Activated T-helper 1 cell treated with anti-CD3 and anti-CD28 coated beads, Interleukin-12 subunit alpha, Interleukin-12 subunit beta, Interleukin-2, Interleukin-4 antibody, amounts not matched to agents 30 ng/mL and 10 ng/mL and 1 ng/mL, durations not matched to agents 14 hours and 24 hours and 36 hours (primary cell): ENCODE measurements at regions of chr5 and their contacts with region 1.

Region 1: GRCh38 chr5:61408476-61409168 is 76.6 kb downstream of the ZSWIM6 start:
- DNase-seq: peak; percentile 90
- H3K4me3 Mint-ChIP-seq: peak overlapping the region; percentile 59
- H3K27ac Mint-ChIP-seq: peak overlapping the region; percentile 56
- H3K4me1 Mint-ChIP-seq: peaks cover 23% of the 10 kb centered on the region
- H3K27me3 Mint-ChIP-seq: peaks cover 7% of the 10 kb centered on the region

Region 2: GRCh38 chr5:60699530-60700382 is 708.9 kb before region 1 on chr5 and contains the start of gene DEPDC1B:
- intact Hi-C with region 1: loop called (anchors 5 kb)
- DNase-seq: peak; percentile 87
- H3K4me3 Mint-ChIP-seq: peak within 1 kb of the TSS; percentile 96
- H3K27ac Mint-ChIP-seq: peak within 1 kb of the TSS; percentile 93
- H3K4me1 Mint-ChIP-seq: peaks cover 37% of the 10 kb centered on the region
- H3K27me3 Mint-ChIP-seq: peaks cover 18% of the 10 kb centered on the region
- total RNA-seq, gene DEPDC1B: 19.6 and 21.2 TPM in 2 replicates

Region 3: DNA sequence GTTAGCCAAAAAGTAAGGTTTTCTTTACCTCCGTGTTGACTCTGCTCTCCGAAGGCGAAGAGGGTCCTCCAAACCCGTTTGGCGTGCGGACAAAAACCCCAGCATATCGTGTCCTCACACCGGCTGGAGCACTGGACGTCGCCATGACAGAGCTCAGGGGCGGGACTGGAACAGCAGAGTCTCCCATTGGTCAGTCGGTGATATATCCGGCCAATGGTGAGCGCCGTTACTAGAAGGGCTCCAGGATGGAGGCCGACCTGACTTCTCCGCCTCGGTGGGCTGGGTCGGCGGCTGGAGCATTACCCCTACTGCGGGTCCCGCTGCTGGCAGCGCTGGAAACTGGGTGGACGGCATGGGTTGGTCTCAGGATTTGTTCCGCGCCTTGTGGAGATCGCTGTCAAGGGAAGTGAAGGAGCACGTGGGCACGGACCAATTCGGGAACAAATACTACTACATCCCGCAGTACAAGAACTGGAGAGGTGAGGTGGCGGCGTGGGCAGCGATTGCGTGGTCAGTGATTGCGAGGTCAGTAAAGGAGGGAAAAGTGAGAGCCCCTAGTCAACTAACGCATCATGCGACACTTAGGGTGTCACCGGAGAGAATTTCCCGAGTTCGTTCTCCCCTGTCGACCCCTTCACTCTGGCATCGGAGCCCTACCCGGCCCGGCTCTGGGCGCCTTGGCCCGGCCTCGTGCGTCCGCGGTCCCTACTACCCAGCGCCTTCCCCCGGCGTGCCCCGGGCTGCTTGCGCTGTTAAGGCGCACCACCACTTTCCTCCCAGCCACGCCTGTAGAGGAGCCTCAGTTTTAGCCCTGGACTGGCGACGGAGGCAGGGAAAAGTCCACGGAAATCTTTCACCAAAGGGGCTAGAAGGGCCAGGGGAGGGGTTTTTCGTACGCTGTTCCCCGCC is 463.5 kb before region 1 on chr5 and contains the starts of genes ERCC8 and NDUFAF2:
- intact Hi-C with region 1: loop called (anchors 1 kb)
- DNase-seq: peak; percentile 85
- H3K4me3 Mint-ChIP-seq: no peak within 1 kb of the TSS
- H3K27ac Mint-ChIP-seq: no peak within 1 kb of the TSS
- H3K4me1 Mint-ChIP-seq: peaks cover 22% of the 10 kb centered on the region
- H3K27me3 Mint-ChIP-seq: no peaks in the 10 kb centered on the region
- total RNA-seq, gene ERCC8: 9.8 and 10.7 TPM in 2 replicates
- total RNA-seq, gene NDUFAF2: 32.9 and 33.8 TPM in 2 replicates

Region 4: DNA sequence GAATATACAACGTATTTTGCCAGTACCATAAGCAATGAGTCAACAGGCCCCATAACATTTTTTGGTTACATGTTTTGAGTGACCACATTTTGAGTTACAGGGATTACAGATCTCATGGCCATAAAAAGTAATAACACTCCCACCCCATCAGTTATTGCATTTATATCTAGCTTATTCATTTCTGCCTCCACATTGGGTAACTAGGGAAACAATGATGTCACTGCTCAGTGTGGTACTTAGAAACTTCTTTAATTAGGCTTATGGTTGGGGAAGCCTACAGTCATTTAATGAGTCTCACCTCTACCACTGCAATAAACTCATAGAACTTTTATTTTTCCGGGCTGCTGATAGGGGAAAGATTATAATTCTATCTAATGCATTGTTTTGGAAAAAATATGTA is 206.4 kb before region 1 on chr5:
- intact Hi-C with region 1: loop called (anchors 1 kb)
- DNase-seq: no peak
- H3K4me3 Mint-ChIP-seq: no peak overlapping the region
- H3K27ac Mint-ChIP-seq: peak overlapping the region; percentile 7
- H3K4me1 Mint-ChIP-seq: peaks cover 11% of the 10 kb centered on the region
- H3K27me3 Mint-ChIP-seq: peaks cover 5% of the 10 kb centered on the region

Region 5: DNA sequence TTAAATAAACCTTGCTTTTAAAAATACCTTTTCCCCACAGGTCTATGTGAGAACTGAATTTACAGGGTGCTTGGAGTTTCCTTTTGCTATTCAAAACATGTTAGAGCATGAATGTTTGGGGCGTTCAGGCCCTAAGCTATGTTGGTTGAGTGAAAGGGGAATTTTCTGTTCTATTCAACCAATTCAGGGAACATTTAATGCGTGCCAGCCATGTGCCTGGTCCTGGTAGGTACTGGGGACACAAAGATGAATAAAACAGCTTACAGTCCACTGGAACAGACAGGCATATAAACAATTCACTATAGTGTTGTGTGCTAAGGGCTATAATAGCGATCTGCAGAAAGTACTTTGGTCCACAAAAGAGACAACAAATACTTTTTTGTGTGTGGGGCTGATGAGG is 32.0 kb after region 1 on chr5:
- intact Hi-C with region 1: no loop called
- DNase-seq: no peak
- H3K4me3 Mint-ChIP-seq: no peak overlapping the region
- H3K27ac Mint-ChIP-seq: no peak overlapping the region
- H3K4me1 Mint-ChIP-seq: no peaks in the 10 kb centered on the region
- H3K27me3 Mint-ChIP-seq: no peaks in the 10 kb centered on the region

Region 6: GRCh38 chr5:61534481-61535267 is 126.1 kb after region 1 on chr5:
- intact Hi-C with region 1: loop called (anchors 1 kb)
- DNase-seq: no peak
- H3K4me3 Mint-ChIP-seq: peak overlapping the region; percentile 25
- H3K27ac Mint-ChIP-seq: peak overlapping the region; percentile 69
- H3K4me1 Mint-ChIP-seq: peaks cover 16% of the 10 kb centered on the region
- H3K27me3 Mint-ChIP-seq: no peaks in the 10 kb centered on the region

Region 7: DNA sequence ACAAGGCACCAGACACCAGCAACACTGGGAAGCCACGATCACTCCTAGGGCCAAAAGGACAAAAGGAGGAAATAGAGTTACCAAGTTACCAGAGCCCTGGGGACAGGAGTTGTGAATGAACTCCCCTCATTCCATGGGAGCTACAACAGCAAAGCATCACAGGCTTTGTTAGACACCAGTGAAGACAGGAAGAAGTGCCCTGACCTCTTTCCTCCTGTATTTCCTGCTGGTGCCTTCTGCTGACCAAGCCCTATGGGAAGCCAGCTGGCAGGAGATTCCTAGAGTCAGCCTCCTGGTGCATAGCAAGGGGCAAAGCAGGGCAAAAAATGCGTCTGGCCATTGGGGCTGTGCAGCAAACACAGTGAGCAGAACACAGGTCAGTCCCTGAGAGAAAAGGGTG is 298.1 kb after region 1 on chr5:
- intact Hi-C with region 1: no loop called
- DNase-seq: no peak
- H3K4me3 Mint-ChIP-seq: no peak overlapping the region
- H3K27ac Mint-ChIP-seq: no peak overlapping the region
- H3K4me1 Mint-ChIP-seq: no peaks in the 10 kb centered on the region
- H3K27me3 Mint-ChIP-seq: no peaks in the 10 kb centered on the region

Region 8: GRCh38 chr5:62403434-62404250 is 995.0 kb after region 1 on chr5 and contains the start of gene DIMT1:
- intact Hi-C with region 1: loop called (anchors 5 kb)
- DNase-seq: peak; percentile 93
- H3K4me3 Mint-ChIP-seq: peak within 1 kb of the TSS; percentile 95
- H3K27ac Mint-ChIP-seq: peak within 1 kb of the TSS; percentile 94
- H3K4me1 Mint-ChIP-seq: peaks cover 34% of the 10 kb centered on the region
- H3K27me3 Mint-ChIP-seq: no peaks in the 10 kb centered on the region
- total RNA-seq, gene DIMT1: 42.4 and 45.0 TPM in 2 replicates

Region 9: GRCh38 chr5:63008195-63008594 is 1599.6 kb after region 1 on chr5:
- intact Hi-C with region 1: no loop called
- DNase-seq: no peak
- H3K4me3 Mint-ChIP-seq: no peak overlapping the region
- H3K27ac Mint-ChIP-seq: no peak overlapping the region
- H3K4me1 Mint-ChIP-seq: no peaks in the 10 kb centered on the region
- H3K27me3 Mint-ChIP-seq: no peaks in the 10 kb centered on the region